ENCODE measurements at regions of chr17 and their contacts with region 1.

Region 1: DNA sequence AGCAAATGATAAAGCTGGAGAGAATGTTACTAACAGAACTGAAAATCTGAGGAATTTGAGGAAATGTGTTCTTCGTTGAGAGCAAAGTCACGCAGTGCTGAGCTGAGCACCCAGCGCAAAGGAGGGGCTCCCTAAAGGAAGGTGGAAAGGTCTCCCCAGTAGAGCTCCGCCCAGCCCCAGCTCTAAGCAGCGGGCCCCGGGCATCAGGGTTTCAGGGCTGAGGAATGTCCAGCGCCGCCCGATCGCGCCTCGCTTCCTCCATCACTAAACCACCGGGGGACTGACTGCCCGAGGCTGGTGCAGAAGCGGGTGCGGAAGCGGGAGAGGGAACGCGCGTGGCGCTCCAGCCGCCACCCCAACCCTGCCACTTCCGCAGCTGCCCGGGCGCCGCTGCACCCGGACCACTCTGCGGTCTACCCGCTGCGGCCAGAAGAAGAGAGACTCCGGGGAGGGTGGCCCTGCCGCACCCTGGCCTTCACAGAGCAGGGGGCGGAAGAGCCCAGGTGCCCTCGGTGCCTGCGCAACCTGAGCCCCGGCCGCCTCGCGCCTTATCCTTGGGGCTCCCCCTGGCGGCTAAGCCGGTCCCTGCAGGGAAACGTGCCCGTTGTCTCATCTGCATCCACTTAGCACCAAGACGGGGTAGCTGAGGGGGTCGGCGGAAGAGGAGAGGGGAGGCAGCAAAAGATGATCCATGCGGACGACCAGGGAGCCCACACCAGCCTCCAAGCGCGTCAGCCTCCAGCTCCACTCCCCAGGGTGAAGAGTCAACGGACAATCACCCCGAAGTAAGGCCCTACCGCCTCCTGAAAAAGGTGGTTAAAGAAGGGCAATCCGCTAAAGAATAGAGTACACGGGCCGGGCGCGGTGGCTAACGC is 12.4 kb upstream of the GUCY2D start:
- DNase-seq: peak; percentile 92
- ATAC-seq: peak; percentile 91

Region 2: DNA sequence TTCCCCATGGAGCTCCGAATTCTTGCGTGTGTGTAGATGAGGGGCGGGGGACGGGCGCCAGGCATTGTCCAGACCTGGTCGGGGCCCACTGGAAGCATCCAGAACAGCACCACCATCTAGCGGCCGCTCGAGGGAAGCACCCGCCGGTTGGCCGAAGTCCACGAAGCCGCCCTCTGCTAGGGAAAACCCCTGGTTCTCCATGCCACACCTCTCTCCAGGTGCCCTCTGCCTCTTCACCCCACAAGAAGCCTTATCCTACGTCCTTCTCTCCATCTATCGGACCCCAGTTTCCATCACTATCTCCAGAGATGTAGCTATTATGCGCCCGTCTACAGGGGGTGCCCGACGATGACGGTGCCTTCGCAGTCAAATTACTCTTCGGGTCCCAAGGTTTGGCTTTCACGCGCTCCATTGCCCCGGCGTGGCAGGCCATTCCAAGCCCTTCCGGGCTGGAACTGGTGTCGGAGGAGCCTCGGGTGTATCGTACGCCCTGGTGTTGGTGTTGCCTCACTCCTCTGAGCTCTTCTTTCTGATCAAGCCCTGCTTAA is 428.9 kb before region 1 on chr17:
- intact Hi-C with region 1: no loop called
- DNase-seq: peak; percentile 94
- ATAC-seq: peak; percentile 82

Region 3: GRCh38 chr17:7627250-7628121 is 362.5 kb before region 1 on chr17 and contains the start of gene SAT2:
- intact Hi-C with region 1: no loop called
- DNase-seq: peak; percentile 96
- ATAC-seq: peak; percentile 99
- total RNA-seq, gene SAT2: 80.0 TPM

Region 4: GRCh38 chr17:7745748-7746470 is 244.1 kb before region 1 on chr17:
- intact Hi-C with region 1: loop called (anchors 10 kb)
- DNase-seq: no peak
- ATAC-seq: no peak

Region 5: DNA sequence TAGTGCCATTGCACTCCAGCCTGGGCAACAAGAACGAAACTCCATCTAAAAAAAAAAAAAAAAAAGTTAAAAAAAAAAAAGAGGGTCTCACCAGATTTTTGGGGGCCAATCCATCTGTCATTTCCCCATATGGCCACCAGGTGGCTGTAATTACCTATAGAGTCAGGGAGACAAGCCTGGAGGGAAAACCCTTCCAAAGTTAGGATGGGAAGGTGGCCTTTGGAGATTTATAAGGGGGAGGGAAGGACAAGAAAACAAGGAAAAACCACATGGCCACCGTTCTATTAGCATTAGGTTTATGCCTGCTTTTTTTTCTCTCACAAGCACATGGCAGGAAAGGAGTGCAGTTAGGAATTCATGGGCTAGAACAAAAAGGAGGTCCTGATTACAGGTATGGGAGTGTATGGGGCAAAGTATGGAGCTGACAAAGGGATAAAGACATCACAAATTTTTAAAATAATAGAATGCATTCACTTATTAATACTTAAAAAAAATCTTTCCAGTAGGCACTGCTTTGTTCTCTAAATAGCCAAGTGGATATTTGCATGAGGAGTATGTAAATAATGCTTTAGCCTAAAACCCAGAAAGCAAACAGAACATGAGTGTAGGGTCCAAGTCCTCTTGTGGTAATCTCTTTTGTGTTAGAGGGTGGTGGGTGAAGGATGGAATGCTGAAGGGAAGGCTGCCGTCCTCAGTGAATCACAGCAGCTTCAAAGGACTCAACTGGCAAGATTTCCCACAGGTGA is 127.2 kb before region 1 on chr17:
- intact Hi-C with region 1: loop called (anchors 2 kb)
- DNase-seq: no peak
- ATAC-seq: no peak

Region 6: GRCh38 chr17:7915611-7916382 is 74.2 kb before region 1 on chr17 and contains the start of gene RNF227:
- intact Hi-C with region 1: loop called (anchors 2 kb)
- DNase-seq: peak; percentile 95
- ATAC-seq: peak; percentile 94
- total RNA-seq, gene RNF227: 0.78 TPM

Region 7: GRCh38 chr17:8041249-8041928 is 51.4 kb after region 1 on chr17:
- intact Hi-C with region 1: no loop called
- DNase-seq: no peak
- ATAC-seq: peak; percentile 87

Region 8: DNA sequence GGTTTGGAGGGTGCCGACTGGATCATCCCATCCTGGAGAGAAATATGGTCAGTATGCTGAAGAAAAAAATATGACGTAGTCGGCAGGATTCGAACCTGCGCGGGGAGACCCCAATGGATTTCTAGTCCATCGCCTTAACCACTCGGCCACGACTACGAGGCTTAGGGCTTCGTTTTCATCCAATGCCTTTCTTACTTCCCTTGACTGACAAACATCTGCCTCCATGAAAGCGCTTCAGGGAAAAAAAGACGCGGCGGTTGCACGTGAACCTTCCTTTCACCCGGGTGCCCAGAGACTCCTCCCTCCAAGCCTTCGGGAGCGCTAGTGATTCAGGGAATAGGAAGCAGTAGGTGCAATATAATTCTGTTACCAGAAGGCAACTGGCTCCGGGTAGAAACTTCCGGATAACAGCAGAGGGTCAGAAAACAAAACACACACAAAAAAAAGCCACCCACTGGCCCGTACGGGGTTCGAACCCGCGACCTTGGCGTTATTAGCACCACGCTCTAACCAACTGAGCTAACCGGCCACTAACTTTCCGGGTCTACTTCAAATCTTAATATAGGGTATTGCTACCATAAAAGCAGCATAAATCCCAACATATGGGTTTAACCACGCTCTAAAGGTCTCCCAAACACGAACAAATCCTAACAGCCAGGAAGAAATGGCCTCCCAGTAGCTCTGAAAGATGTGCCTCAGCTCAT is 236.7 kb after region 1 on chr17:
- intact Hi-C with region 1: no loop called
- DNase-seq: peak; percentile 62
- ATAC-seq: peak; percentile 10

Measured in Right ventricle myocardium superior (tissue), 1 donor.